ENCODE measurements at regions of chr20 and their contacts with region 1.

Region 1: GRCh38 chr20:12166053-12166717 is 248.5 kb downstream of the BTBD3 start:
- DNase-seq: no peak
- H3K4me3 ChIP-seq: no peak overlapping the region
- H3K27ac ChIP-seq: no peak overlapping the region
- H3K4me1 ChIP-seq: no peaks in the 10 kb centered on the region
- H3K27me3 ChIP-seq: no peaks in the 10 kb centered on the region
- CTCF ChIP-seq: peak in 1 of 3 experiments; percentile 5
- EP300 ChIP-seq: no peak
- POLR2A ChIP-seq: no peak

Region 2: GRCh38 chr20:11564491-11564890 is 601.7 kb before region 1 on chr20:
- intact Hi-C with region 1: no loop called
- DNase-seq: no peak
- H3K4me3 ChIP-seq: no peak overlapping the region
- H3K27ac ChIP-seq: no peak overlapping the region
- H3K4me1 ChIP-seq: no peaks in the 10 kb centered on the region
- H3K27me3 ChIP-seq: no peaks in the 10 kb centered on the region
- CTCF ChIP-seq: no peak
- EP300 ChIP-seq: no peak
- POLR2A ChIP-seq: no peak

Region 3: GRCh38 chr20:12108846-12109245 is 57.3 kb before region 1 on chr20:
- intact Hi-C with region 1: loop called (anchors 10 kb)
- DNase-seq: no peak
- H3K4me3 ChIP-seq: no peak overlapping the region
- H3K27ac ChIP-seq: no peak overlapping the region
- H3K4me1 ChIP-seq: peaks cover 0 to 3% (median 0%) of the 10 kb centered on the region in 4 donors
- H3K27me3 ChIP-seq: no peaks in the 10 kb centered on the region
- CTCF ChIP-seq: no peak
- EP300 ChIP-seq: no peak
- POLR2A ChIP-seq: no peak